ENCODE measurements at regions of chr1 and their contacts with region 1.

Region 1: GRCh38 chr1:91754348-91754747 is 131.6 kb downstream of the TGFBR3 start:
- DNase-seq: peak; percentile 13
- H3K4me3 Mint-ChIP-seq: peak overlapping the region; percentile 28
- H3K27ac Mint-ChIP-seq: peak overlapping the region; percentile 88
- H3K4me1 Mint-ChIP-seq: peaks cover 55% of the 10 kb centered on the region
- H3K27me3 Mint-ChIP-seq: no peaks in the 10 kb centered on the region

Region 2: GRCh38 chr1:91523482-91523881 is 230.9 kb before region 1 on chr1:
- intact Hi-C with region 1: loop called (anchors 1 kb)
- DNase-seq: no peak
- H3K4me3 Mint-ChIP-seq: no peak overlapping the region
- H3K27ac Mint-ChIP-seq: peak overlapping the region; percentile 38
- H3K4me1 Mint-ChIP-seq: peaks cover 47% of the 10 kb centered on the region
- H3K27me3 Mint-ChIP-seq: no peaks in the 10 kb centered on the region

Region 3: DNA sequence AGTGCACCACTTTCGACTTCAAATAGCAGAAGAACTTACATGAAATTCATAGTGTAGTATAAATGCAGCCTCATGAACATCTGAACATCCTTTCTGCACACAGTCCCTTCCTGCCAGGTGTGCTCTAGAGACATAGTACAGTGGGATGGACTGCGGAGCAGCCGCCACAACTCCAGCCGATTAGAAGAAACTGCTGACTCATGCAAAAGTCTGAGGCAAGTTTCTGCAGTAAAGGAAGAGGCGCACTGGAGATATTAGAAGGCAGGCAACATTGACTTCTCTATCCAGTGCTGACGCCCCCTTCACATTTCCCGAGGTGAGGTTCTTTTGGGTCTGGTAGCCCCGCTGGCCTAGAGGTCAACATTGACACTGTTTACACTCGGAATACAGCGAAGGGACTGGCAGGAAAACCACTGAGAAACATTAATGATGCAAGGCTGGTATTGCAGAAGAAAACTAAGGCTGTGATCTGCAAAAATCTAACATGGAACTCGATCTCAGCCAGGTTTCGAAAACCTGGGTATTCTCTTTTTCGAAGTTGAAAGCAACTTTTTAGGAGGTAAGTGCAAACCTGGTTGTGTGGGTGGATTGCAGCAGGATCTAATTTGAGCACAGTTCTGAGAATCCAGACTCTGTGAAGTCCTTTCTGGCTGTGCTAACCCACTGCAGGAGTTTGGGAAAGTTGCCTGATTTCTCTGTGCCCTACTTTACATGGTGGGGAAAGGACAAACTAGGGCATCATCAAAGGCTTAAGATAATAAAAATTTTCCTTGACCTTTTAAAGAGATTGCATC is 163.0 kb before region 1 on chr1:
- intact Hi-C with region 1: loop called (anchors 5 kb)
- DNase-seq: peak; percentile 16
- H3K4me3 Mint-ChIP-seq: peak overlapping the region; percentile 45
- H3K27ac Mint-ChIP-seq: peak overlapping the region; percentile 82
- H3K4me1 Mint-ChIP-seq: peaks cover 35% of the 10 kb centered on the region
- H3K27me3 Mint-ChIP-seq: no peaks in the 10 kb centered on the region

Region 4: DNA sequence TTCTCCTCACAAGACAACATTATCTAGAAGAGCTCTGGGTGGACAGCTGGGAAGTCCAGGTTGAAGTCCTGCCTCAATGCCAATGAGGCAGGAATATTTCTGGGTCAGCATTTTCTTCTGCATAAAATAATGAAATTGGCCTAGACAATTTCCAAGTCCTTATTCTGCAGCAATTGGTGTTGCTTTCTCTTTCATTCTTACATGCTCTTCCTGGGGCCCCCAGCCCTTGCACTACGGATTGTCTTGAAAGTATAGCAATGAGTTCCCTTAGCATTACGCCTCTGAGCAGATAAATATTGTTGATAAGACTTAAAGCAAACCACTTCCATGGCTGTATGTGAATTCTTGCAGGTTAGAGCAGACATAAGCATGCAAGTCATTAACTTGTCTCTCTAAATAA is 56.9 kb before region 1 on chr1:
- intact Hi-C with region 1: loop called (anchors 1 kb)
- DNase-seq: peak; percentile 73
- H3K4me3 Mint-ChIP-seq: peak overlapping the region; percentile 61
- H3K27ac Mint-ChIP-seq: peak overlapping the region; percentile 89
- H3K4me1 Mint-ChIP-seq: peaks cover 61% of the 10 kb centered on the region
- H3K27me3 Mint-ChIP-seq: no peaks in the 10 kb centered on the region

Region 5: GRCh38 chr1:91732291-91733107 is 21.8 kb before region 1 on chr1:
- intact Hi-C with region 1: loop called (anchors 1 kb)
- DNase-seq: no peak
- H3K4me3 Mint-ChIP-seq: no peak overlapping the region
- H3K27ac Mint-ChIP-seq: peak overlapping the region; percentile 75
- H3K4me1 Mint-ChIP-seq: peaks cover 57% of the 10 kb centered on the region
- H3K27me3 Mint-ChIP-seq: no peaks in the 10 kb centered on the region

Region 6: GRCh38 chr1:91876040-91876470 is 121.7 kb after region 1 on chr1:
- intact Hi-C with region 1: loop called (anchors 1 kb)
- DNase-seq: no peak
- H3K4me3 Mint-ChIP-seq: no peak overlapping the region
- H3K27ac Mint-ChIP-seq: peak overlapping the region; percentile 32
- H3K4me1 Mint-ChIP-seq: peaks cover 69% of the 10 kb centered on the region
- H3K27me3 Mint-ChIP-seq: peaks cover 2% of the 10 kb centered on the region